K562 (cell line): ENCODE measurements at regions of chr3 and their contacts with region 1.

Region 1: GRCh38 chr3:143182866-143183664 is 63.5 kb downstream of the CHST2 start:
- DNase-seq: peak in 1 of 4 experiments; percentile 56
- ATAC-seq: peak; percentile 64
- H3K4me3 ChIP-seq: no peak overlapping the region
- H3K27ac ChIP-seq: peak overlapping the region; percentile 77
- H3K4me1 ChIP-seq: peaks cover 9 to 53% of the 10 kb centered on the region in 2 experiments
- H3K27me3 ChIP-seq: no peaks in the 10 kb centered on the region
- CTCF ChIP-seq: no peak
- EP300 ChIP-seq: no peak; the same call in 1 of the 2 replicates
- POLR2A ChIP-seq: no peak
- RAD21 ChIP-seq: no peak

Region 2: GRCh38 chr3:142366436-142366835 is 816.6 kb before region 1 on chr3:
- CTCF ChIA-PET with region 1: no interaction called
- POLR2A ChIA-PET with region 1: no interaction called
- in situ Hi-C with region 1: no loop called
- intact Hi-C with region 1: no loop called
- DNase-seq: peak in 2 of 4 experiments; percentile 12
- ATAC-seq: peak; percentile 68
- H3K4me3 ChIP-seq: no peak overlapping the region
- H3K27ac ChIP-seq: no peak overlapping the region
- H3K4me1 ChIP-seq: no peaks in the 10 kb centered on the region
- H3K27me3 ChIP-seq: no peaks in the 10 kb centered on the region
- CTCF ChIP-seq: peak in 1 of 3 experiments; percentile 46; a peak in 2 of 6 replicates
- EP300 ChIP-seq: no peak
- POLR2A ChIP-seq: no peak
- RAD21 ChIP-seq: peak in 1 of 2 experiments; percentile 42; a peak in 2 of 4 replicates

Region 3: DNA sequence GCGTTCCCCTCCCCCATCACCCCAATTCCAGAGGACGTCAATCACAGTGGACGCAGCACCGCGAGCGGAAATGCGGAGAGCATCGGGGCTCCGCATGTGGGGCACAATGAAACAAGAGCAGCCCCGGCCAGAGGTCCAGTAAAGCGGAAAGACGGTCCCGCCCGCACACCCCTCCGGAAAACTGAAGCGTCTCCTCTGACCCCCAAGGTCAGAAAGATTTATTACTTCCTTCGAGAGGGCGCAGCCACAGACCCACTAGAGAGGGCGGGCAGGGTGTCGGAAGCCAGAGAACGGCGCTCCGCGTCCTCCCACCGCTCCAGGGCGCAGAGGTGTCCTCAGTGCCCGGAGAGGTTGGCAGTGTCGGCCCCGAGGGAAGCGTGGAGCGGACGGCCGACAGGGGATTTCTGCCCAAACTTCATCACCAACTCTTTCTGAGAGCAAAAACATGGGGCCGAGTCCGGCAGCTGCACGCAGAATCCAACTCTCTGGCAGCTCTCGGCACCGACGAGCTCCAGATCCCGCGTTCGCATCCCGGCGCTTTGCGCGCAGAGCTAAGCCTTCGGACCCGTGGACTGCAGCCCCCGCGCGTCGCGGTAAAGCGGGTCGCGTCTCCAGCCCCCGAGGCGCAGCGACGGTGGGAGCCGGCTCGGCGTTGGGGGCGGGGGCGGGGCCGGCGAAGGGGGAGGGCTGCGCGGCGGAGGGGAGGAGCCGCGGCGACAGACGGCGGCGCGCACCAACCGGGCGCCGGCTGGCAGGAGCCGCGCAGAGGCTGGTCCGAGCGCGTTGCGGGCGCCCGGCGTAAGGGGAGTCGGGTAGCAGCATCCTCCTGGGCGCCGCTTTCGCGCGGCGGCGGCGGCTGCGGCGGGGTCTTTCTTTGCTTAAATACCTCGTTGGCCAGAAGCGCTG is 63.8 kb before region 1 on chr3 and contains the start of gene CHST2:
- CTCF ChIA-PET with region 1: no interaction called
- POLR2A ChIA-PET with region 1: interaction called, 5 read pairs
- in situ Hi-C with region 1: no loop called
- intact Hi-C with region 1: loop called (anchors 5 kb)
- DNase-seq: peak; percentile 89 to 97 (median 95)
- ATAC-seq: peak; percentile 89
- H3K4me3 ChIP-seq: peak within 1 kb of the TSS; percentile 89
- H3K27ac ChIP-seq: peak within 1 kb of the TSS; percentile 99
- H3K4me1 ChIP-seq: peaks cover 32 to 34% of the 10 kb centered on the region in 2 experiments; a peak in 4 of 5 replicates
- H3K27me3 ChIP-seq: no peaks in the 10 kb centered on the region
- CTCF ChIP-seq: no peak
- EP300 ChIP-seq: peak; percentile 61; the same call in 1 of the 2 replicates
- POLR2A ChIP-seq: peak; percentile 91
- RAD21 ChIP-seq: peak in 1 of 2 experiments; percentile 16; a peak in 2 of 4 replicates
- polyA plus RNA-seq, gene CHST2: 3.4 to 3.7 TPM

Region 4: DNA sequence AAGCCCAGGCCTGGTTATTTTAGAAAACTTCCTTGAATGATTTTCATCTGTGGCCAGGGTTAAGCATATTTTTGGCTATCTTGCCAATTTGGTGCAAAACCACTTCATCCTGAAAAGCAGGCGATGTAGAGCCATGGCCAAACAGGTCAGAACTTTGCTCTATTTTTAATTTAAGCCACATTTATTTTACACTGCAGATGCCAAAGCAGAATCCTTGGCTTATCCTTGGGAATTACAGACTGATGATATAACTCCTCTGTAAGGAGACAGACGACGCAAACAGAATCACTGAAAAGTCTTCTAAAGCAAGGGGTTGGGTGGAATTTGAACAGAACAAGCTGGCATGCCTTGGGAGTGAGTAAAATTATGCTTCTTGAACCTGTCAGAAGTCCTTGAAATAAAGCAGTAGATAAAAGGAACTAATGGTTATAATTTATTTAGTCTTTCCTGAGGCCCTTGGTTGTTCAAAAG is 58.5 kb after region 1 on chr3:
- CTCF ChIA-PET with region 1: no interaction called
- POLR2A ChIA-PET with region 1: no interaction called
- in situ Hi-C with region 1: loop called (anchors 5 kb)
- intact Hi-C with region 1: no loop called
- DNase-seq: no peak
- ATAC-seq: no peak
- H3K4me3 ChIP-seq: no peak overlapping the region
- H3K27ac ChIP-seq: no peak overlapping the region
- H3K4me1 ChIP-seq: peaks cover 0 to 7% of the 10 kb centered on the region in 2 experiments; a peak in 3 of 5 replicates
- H3K27me3 ChIP-seq: no peaks in the 10 kb centered on the region
- CTCF ChIP-seq: no peak
- EP300 ChIP-seq: no peak
- POLR2A ChIP-seq: no peak
- RAD21 ChIP-seq: no peak